Activated CD4-positive, alpha-beta memory T cell treated with anti-CD3 and anti-CD28 coated beads, Interleukin-2, amount 10 ng/mL, durations not matched to agents 7 days and 5 days (primary cell): ENCODE measurements at regions of chr11 and their contacts with region 1.

Region 1: GRCh38 chr11:118791111-118791965 is at the start of gene DDX6:
- DNase-seq: peak; percentile 93
- H3K4me3 Mint-ChIP-seq: peak within 1 kb of the TSS; percentile 100
- H3K27ac Mint-ChIP-seq: peak within 1 kb of the TSS; percentile 95
- H3K4me1 Mint-ChIP-seq: peaks cover 19% of the 10 kb centered on the region
- H3K27me3 Mint-ChIP-seq: no peaks in the 10 kb centered on the region
- total RNA-seq, gene DDX6: 154 to 155 TPM

Region 2: DNA sequence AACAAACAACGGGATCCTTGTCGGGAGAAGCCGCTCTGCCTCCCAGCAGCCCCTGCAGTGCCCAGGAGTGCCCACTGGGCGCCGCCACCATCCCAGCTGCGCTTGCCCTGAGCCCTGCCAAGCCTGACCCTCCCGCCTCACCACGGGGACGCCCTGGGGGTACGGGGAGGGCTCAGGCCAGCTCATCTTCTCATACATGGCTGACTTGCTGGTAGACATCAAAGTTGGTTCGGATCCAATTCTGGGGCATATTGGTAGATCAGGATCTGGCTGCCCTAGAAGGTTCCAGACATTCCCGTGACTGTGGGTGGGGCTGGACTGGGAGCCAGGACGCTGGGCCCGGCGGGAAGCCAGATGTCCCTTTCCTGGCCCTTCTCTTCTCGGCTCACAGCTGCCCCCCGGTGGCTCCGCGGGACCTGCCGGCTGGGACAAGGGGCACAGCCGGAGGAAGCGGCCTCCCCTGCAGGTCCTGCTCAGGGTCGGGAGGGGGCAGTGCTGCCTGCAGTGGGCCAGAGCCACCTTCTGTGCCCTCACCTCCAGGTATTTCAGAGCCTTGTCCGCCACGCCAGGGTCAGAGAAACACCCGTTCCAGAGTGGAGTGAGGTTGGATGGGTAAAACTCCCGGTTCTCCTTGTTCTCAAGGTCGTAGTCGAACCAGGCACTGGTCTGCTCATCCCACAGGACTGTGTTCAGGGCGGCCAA is 101.3 kb before region 1 on chr11:
- CTCF ChIA-PET with region 1: interaction called, 12 read pairs
- POLR2A ChIA-PET with region 1: interaction called, 21 read pairs
- DNase-seq: peak; percentile 88
- H3K4me3 Mint-ChIP-seq: peak overlapping the region; percentile 55
- H3K27ac Mint-ChIP-seq: no peak overlapping the region
- H3K4me1 Mint-ChIP-seq: peaks cover 42% of the 10 kb centered on the region
- H3K27me3 Mint-ChIP-seq: peaks cover 20% of the 10 kb centered on the region

Region 3: GRCh38 chr11:118845369-118845768 is 54.0 kb after region 1 on chr11:
- CTCF ChIA-PET with region 1: interaction called, 5 read pairs
- POLR2A ChIA-PET with region 1: interaction called, 10 read pairs
- DNase-seq: no peak
- H3K4me3 Mint-ChIP-seq: no peak overlapping the region
- H3K27ac Mint-ChIP-seq: peak overlapping the region; percentile 65
- H3K4me1 Mint-ChIP-seq: peaks cover 30% of the 10 kb centered on the region
- H3K27me3 Mint-ChIP-seq: peaks cover 4% of the 10 kb centered on the region

Region 4: DNA sequence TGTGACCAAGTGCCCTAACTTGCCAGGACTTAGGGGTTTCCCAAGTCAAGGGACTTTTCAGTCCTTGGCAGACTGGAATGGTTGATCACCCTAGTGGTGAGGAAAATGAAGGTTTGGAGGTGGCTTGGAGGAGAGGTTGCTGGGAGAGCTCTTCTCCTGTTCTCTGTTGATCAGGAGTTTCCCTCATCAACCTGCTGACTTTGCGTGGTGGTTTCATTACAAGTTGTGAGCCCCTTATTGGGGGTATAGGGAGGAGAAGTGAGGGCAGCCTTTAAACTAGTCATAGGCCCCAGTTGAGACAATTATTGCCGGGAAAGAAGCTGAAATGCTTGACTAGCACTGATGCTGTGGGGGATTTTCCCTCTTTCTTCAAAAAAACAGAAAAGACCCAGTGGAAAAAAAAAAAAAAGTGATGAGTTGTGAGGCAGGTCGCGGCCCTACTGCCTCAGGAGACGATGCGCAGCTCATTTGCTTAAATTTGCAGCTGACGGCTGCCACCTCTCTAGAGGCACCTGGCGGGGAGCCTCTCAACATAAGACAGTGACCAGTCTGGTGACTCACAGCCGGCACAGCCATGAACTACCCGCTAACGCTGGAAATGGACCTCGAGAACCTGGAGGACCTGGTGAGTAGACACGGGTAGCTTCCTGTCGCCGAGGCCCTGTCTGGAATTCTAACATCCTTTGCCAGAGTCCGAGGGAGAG is 92.2 kb after region 1 on chr11 and contains the start of gene CXCR5:
- CTCF ChIA-PET with region 1: interaction called, 20 read pairs
- POLR2A ChIA-PET with region 1: interaction called, 77 read pairs
- DNase-seq: no peak
- H3K4me3 Mint-ChIP-seq: peak within 1 kb of the TSS; percentile 53
- H3K27ac Mint-ChIP-seq: peak within 1 kb of the TSS; percentile 16
- H3K4me1 Mint-ChIP-seq: peaks cover 55% of the 10 kb centered on the region
- H3K27me3 Mint-ChIP-seq: peaks cover 16% of the 10 kb centered on the region
- total RNA-seq, gene CXCR5: 0.83 to 0.86 TPM

Region 5: DNA sequence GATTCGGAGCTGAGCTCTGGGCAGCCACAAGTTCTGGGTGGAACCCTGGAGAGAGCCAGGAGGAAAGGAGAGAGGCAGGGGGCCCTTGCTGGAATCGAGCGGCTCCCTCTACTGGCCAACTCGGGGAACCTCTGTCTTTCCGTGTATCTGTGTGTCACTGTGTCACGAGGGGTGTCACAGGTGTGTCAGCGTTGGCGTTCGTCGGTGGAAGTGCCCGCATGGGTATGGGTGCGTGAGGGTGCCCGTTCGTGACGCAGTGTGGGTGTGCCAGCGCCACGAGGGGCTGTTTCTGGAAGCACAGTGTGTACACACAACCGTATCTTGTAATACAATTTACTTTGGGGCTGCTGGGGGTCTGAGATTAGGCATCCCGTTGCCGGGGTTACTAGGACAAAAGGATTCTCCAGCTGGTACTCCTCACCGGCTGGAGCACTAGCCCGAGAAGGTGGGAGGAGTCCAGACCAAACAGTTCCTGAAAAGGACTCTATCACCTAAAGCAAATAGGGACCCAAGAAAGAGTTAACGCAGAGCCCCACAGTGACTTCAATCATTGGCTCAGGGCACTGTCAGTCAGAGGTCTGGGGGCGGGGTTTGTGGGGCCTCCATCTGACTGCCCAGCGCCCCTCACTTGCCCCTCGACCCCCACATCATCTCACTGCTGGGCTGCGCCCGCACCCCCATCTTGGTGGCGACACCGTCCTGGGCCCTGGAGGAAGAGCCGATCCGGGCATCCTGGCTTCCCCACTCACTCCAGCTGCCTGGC is 137.0 kb after region 1 on chr11:
- CTCF ChIA-PET with region 1: interaction called, 14 read pairs
- POLR2A ChIA-PET with region 1: interaction called, 46 read pairs
- DNase-seq: peak; percentile 91
- H3K4me3 Mint-ChIP-seq: peak overlapping the region; percentile 89
- H3K27ac Mint-ChIP-seq: peak overlapping the region; percentile 92
- H3K4me1 Mint-ChIP-seq: peaks cover 48% of the 10 kb centered on the region
- H3K27me3 Mint-ChIP-seq: peaks cover 2% of the 10 kb centered on the region

Region 6: DNA sequence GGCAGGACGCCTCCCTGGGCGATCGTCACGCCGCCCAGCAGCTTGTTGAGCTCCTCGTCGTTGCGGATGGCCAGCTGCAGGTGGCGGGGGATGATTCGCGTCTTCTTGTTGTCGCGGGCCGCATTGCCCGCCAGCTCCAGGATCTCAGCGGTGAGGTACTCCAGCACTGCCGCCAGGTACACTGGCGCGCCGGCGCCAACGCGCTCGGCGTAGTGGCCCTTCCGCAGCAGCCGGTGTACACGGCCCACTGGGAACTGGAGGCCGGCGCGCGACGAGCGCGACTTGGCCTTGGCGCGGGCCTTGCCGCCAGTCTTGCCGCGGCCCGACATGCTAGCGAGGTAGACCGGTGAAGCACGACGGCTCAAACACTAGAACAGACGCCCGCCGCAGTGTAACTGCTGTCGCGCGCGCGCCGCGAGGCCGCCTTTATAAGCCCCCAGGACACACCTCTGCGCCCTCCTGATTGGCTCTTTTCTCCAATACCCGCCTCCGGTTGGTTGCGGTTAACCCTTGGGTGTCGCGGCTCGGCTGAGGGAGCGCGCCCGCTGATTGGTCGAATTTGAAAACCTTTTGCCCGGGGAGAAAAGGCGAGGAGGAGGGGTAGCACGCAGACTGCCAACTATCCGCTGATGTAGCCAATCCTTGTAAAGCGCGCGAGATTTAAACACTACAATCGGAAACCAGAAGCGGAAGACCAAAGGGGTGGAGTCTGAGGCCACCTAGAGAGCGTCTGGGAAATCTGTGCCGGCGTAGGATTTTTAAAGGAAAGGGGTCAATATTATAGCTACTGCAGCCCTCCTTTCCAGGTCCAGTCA is 303.9 kb after region 1 on chr11:
- CTCF ChIA-PET with region 1: no interaction called
- POLR2A ChIA-PET with region 1: interaction called, 10 read pairs
- DNase-seq: peak; percentile 100
- H3K4me3 Mint-ChIP-seq: peak overlapping the region; percentile 93
- H3K27ac Mint-ChIP-seq: peak overlapping the region; percentile 86
- H3K4me1 Mint-ChIP-seq: peaks cover 70% of the 10 kb centered on the region
- H3K27me3 Mint-ChIP-seq: no peaks in the 10 kb centered on the region